Activated CD4-positive, alpha-beta memory T cell treated with anti-CD3 and anti-CD28 coated beads, Interleukin-2, amount 10 ng/mL, durations not matched to agents 7 days and 5 days (primary cell): ENCODE measurements at regions of chr7 and their contacts with region 1.

Region 1: GRCh38 chr7:129054438-129055293 is at the start of gene TNPO3:
- DNase-seq: peak; percentile 90
- H3K4me3 Mint-ChIP-seq: peak within 1 kb of the TSS; percentile 96
- H3K27ac Mint-ChIP-seq: peak within 1 kb of the TSS; percentile 98
- H3K4me1 Mint-ChIP-seq: peaks cover 41% of the 10 kb centered on the region
- H3K27me3 Mint-ChIP-seq: peaks cover 6% of the 10 kb centered on the region
- total RNA-seq, gene TNPO3: 42.7 to 44.4 TPM

Region 2: DNA sequence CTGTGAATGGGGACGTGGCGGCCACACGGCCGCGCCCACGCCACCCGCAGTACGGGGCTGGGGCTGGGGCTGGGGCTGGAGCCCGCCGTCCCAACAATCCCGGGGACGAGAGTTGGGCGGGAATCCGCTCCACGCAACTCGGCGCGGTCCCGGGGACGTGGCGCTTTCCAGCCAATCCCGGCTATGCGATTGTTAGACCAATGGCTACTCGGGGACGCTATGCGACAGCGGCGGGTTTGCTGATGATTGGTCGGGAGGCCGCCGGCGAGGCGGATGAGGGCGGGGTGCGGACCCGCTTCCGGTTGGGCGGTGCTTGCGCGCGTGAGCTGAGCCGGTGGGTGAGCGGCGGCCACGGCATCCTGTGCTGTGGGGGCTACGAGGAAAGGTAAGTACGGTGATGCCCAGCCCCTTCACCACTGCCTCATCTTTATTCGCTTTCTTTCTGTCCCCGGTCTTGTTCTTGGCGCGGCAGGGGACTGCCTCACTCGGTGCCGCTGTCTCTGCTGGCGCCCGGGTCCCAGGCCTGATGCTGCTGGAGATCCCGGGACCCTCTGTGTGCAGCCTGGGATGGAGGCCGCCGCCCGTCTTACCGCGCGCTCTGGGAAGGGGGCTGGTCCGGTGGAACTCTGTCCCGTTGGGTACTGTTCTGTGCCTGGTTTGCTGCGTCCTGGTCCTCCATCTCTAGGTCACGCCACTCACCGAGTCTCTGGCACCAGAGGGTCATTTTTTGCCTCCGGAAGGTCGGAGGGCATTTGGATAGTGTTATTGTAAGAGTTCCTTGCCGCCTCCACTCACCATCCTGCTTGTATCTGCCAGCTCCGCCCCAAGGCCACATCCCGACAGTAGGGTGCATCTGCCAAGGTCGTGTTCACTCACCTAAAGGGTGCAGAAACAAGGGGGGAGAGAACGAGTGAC is 315.4 kb before region 1 on chr7 and contains the start of gene CALU:
- CTCF ChIA-PET with region 1: no interaction called
- POLR2A ChIA-PET with region 1: interaction called, 15 read pairs
- DNase-seq: peak; percentile 96
- H3K4me3 Mint-ChIP-seq: peak within 1 kb of the TSS; percentile 99
- H3K27ac Mint-ChIP-seq: peak within 1 kb of the TSS; percentile 97
- H3K4me1 Mint-ChIP-seq: peaks cover 40% of the 10 kb centered on the region
- H3K27me3 Mint-ChIP-seq: peaks cover 5% of the 10 kb centered on the region
- total RNA-seq, gene CALU: 34.3 to 36.3 TPM

Region 3: GRCh38 chr7:128849804-128850490 is 204.7 kb before region 1 on chr7:
- CTCF ChIA-PET with region 1: no interaction called
- POLR2A ChIA-PET with region 1: no interaction called
- DNase-seq: no peak
- H3K4me3 Mint-ChIP-seq: no peak overlapping the region
- H3K27ac Mint-ChIP-seq: no peak overlapping the region
- H3K4me1 Mint-ChIP-seq: no peaks in the 10 kb centered on the region
- H3K27me3 Mint-ChIP-seq: no peaks in the 10 kb centered on the region

Region 4: GRCh38 chr7:128940494-128941322 is 114.0 kb before region 1 on chr7:
- CTCF ChIA-PET with region 1: no interaction called
- POLR2A ChIA-PET with region 1: interaction called, 19 read pairs
- DNase-seq: peak; percentile 59
- H3K4me3 Mint-ChIP-seq: peak overlapping the region; percentile 88
- H3K27ac Mint-ChIP-seq: peak overlapping the region; percentile 76
- H3K4me1 Mint-ChIP-seq: peaks cover 39% of the 10 kb centered on the region
- H3K27me3 Mint-ChIP-seq: peaks cover 7% of the 10 kb centered on the region

Region 5: DNA sequence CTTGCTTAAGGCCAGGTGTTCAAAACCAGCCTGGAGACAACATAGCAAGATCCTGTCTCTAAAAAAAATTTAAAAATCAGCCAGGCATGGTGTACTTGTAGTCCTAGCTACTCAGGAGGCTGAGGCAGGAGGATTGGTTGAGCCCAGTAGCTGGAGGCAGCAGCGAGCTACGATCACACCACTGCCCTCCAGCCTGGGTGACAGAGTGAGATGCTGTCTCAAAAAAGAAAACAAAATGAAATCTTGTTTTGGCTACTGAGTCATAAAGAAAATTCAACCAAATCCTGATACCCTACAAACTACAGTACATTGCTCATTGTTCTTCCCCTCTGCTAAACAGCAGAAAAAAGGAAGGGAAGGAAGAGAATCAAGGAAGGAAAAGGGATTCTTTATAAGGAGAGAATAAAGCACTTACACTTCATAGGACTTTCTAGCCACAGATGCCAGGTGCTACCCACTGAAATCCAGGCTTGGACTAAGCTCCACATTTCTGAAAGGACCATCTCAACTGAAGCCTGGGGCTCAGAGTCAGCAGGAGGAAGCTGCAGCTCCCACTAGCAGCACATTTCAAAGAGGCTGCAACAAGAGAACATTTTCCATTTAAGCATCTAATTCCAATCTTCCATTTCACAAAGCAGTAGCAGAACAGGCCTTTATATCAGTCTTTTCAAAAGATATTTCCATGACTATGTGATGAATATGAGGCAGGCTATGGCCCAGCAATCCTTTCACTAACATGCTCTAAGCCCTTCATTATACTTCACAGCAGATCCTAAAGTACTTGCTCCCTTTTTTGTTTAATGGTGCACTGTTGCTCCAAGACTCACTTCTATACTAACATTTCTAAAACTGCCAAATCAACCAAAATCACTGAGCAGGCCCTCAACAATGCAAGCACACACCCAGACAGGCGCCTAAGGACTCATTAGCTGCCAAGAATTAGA is 13.3 kb before region 1 on chr7:
- CTCF ChIA-PET with region 1: no interaction called
- POLR2A ChIA-PET with region 1: interaction called, 14 read pairs
- DNase-seq: no peak
- H3K4me3 Mint-ChIP-seq: no peak overlapping the region
- H3K27ac Mint-ChIP-seq: no peak overlapping the region
- H3K4me1 Mint-ChIP-seq: peaks cover 42% of the 10 kb centered on the region
- H3K27me3 Mint-ChIP-seq: no peaks in the 10 kb centered on the region

Region 6: DNA sequence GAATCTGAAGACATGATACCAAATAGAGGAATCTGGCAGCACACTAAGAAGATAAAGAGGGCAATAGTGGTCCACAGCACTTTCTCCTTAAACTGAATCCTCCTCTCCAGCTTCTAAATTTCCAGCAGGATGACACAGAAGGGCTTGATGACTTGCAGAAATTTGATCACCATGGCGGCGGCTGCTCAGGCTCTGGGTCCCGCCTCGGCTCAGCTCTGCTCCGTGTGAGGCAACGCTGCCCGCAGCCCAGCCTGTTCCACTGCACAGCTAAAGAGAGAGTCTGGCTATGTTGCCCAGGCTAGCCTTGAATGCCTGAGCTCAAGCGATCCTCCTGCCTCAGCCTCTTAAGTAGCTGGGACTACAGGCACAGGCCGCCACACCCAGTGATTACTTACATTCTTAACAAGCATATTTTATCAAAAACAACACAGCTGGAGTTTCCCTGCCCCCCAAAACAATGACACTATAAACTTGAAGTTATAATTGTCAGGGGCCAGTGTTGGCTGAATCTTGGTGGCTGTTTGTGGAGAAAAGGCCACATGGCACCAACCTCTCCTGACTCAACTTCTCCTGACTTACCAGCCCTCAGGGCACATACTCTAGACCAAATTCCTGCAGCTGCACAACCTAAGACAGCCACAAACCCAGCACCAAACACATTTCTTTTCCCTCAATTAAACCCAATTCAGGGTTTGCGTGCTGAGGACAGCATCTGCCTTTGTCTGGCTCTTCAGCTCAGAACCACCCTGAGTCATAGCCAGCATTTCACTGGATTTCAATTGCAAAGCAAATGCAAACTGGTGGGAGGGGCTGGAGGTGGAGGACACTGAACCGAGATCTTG is 11.8 kb after region 1 on chr7:
- CTCF ChIA-PET with region 1: interaction called, 7 read pairs
- POLR2A ChIA-PET with region 1: interaction called, 49 read pairs
- DNase-seq: no peak
- H3K4me3 Mint-ChIP-seq: no peak overlapping the region
- H3K27ac Mint-ChIP-seq: no peak overlapping the region
- H3K4me1 Mint-ChIP-seq: peaks cover 4% of the 10 kb centered on the region
- H3K27me3 Mint-ChIP-seq: peaks cover 22% of the 10 kb centered on the region

Region 7: DNA sequence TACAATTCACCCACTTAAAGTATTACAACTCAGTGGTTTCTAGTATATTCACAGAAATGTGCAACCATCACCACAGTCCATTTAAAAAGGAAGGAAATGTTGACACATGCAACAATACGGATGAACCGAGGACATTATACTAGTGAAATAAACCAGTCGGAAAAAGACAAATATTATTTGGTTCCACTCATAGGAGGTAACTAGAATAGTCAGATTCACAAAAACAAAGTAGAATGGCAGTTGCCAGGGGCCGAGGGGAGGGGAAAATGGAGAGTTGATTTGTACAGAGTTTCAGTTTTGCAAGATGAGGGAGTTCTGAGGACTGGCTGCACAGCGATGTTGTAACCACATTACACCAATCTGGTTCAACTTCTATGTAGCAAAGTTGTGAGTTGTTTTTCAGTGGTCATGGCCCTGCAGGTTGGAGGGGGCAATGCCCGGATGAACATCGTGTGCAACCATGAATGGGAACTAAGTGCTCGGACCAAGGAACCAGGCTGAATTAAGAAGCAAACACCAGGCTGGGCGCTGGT is 17.9 kb after region 1 on chr7:
- CTCF ChIA-PET with region 1: no interaction called
- POLR2A ChIA-PET with region 1: interaction called, 49 read pairs
- DNase-seq: no peak
- H3K4me3 Mint-ChIP-seq: no peak overlapping the region
- H3K27ac Mint-ChIP-seq: peak overlapping the region; percentile 33
- H3K4me1 Mint-ChIP-seq: peaks cover 13% of the 10 kb centered on the region
- H3K27me3 Mint-ChIP-seq: peaks cover 9% of the 10 kb centered on the region

Region 8: GRCh38 chr7:129091484-129092002 is 36.9 kb after region 1 on chr7:
- CTCF ChIA-PET with region 1: interaction called, 22 read pairs
- POLR2A ChIA-PET with region 1: interaction called, 8 read pairs
- DNase-seq: peak; percentile 88
- H3K4me3 Mint-ChIP-seq: no peak overlapping the region
- H3K27ac Mint-ChIP-seq: no peak overlapping the region
- H3K4me1 Mint-ChIP-seq: peaks cover 33% of the 10 kb centered on the region
- H3K27me3 Mint-ChIP-seq: peaks cover 7% of the 10 kb centered on the region